GM12878 (cell line): ENCODE measurements at regions of chrX and their contacts with region 1.

Region 1: DNA sequence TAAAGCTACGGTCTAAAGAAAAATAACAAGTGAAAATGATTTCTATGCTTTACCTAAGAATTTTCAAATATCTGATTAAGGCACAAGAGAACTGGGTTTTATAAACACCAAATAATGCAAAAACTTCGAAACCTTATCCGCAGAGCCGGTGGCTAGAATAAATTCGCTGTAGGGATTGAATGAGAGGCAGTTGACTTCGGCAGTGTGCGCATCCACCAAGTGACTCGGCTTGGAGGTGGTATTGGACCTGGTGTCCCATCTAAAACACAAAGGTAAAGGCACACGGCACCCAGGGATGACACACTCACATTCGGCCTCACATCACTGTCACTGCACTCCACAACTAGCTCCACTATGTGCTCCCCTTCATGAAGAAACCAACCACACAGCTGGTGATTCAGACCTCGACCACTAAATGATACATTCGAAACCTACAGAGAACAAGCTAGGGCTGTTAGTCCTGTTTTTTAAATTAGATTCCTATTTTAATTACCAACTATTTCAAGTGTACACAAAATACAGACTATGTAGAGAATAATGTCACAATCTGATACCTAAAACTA is 17.5 kb downstream of the RBBP7 start:
- DNase-seq: no peak
- ATAC-seq: peak; percentile 60
- H3K4me3 ChIP-seq: no peak overlapping the region
- H3K27ac ChIP-seq: no peak overlapping the region
- H3K4me1 ChIP-seq: no peaks in the 10 kb centered on the region
- H3K27me3 ChIP-seq: no peaks in the 10 kb centered on the region
- CTCF ChIP-seq: no peak
- EP300 ChIP-seq: no peak
- POLR2A ChIP-seq: no peak
- RAD21 ChIP-seq: no peak

Region 2: DNA sequence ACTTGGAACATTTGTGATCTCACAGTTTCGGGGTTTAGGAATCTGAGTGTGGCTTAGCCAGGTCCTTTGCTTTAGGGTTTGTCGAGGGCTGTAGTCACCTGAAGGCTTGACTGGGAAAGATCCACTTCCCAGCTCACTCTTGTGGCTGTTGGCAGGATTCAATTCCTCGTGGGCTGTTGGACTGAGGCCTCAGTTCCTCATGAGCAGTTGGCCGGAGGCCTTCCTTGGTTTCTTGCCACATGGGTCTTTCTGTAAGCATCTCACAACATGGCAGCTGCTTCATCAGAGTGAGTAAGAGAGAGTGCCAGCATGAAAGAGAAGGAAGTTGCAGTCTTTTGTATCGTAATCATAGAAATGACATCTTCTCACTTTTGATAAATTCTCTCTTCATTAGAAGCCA is 55.3 kb before region 1 on chrX:
- CTCF ChIA-PET with region 1: no interaction called
- POLR2A ChIA-PET with region 1: no interaction called
- RAD21 ChIA-PET with region 1: no interaction called
- SMC1A ChIA-PET with region 1: no interaction called
- in situ Hi-C with region 1: no loop called
- intact Hi-C with region 1: no loop called
- DNase-seq: no peak
- ATAC-seq: no peak
- H3K4me3 ChIP-seq: no peak overlapping the region
- H3K27ac ChIP-seq: no peak overlapping the region
- H3K4me1 ChIP-seq: no peaks in the 10 kb centered on the region
- H3K27me3 ChIP-seq: no peaks in the 10 kb centered on the region
- CTCF ChIP-seq: no peak
- EP300 ChIP-seq: no peak
- POLR2A ChIP-seq: no peak
- RAD21 ChIP-seq: no peak

Region 3: GRCh38 chrX:16870095-16870860 is 17.6 kb after region 1 on chrX and contains the start of gene RBBP7:
- CTCF ChIA-PET with region 1: no interaction called
- POLR2A ChIA-PET with region 1: interaction called, 12 read pairs
- RAD21 ChIA-PET with region 1: no interaction called
- SMC1A ChIA-PET with region 1: interaction called, 8 read pairs
- in situ Hi-C with region 1: no loop called
- intact Hi-C with region 1: no loop called
- DNase-seq: peak; percentile 57
- ATAC-seq: peak; percentile 89
- H3K4me3 ChIP-seq: peak within 1 kb of the TSS; percentile 93
- H3K27ac ChIP-seq: peak within 1 kb of the TSS; percentile 92
- H3K4me1 ChIP-seq: peaks cover 7% of the 10 kb centered on the region
- H3K27me3 ChIP-seq: peaks cover 0 to 6% of the 10 kb centered on the region in 2 experiments; a peak in 1 of 4 replicates
- CTCF ChIP-seq: no peak
- EP300 ChIP-seq: no peak
- POLR2A ChIP-seq: peak; percentile 84
- RAD21 ChIP-seq: no peak
- polyA plus RNA-seq, gene RBBP7: 95.3 to 155 TPM

Region 4: GRCh38 chrX:17547658-17548057 is 695.0 kb after region 1 on chrX:
- CTCF ChIA-PET with region 1: no interaction called
- POLR2A ChIA-PET with region 1: no interaction called
- RAD21 ChIA-PET with region 1: no interaction called
- SMC1A ChIA-PET with region 1: no interaction called
- in situ Hi-C with region 1: no loop called
- intact Hi-C with region 1: no loop called
- DNase-seq: peak; percentile 56
- ATAC-seq: peak; percentile 77
- H3K4me3 ChIP-seq: no peak overlapping the region
- H3K27ac ChIP-seq: 0 out of 2 replicates have a peak overlapping the region, but pooled peaks have one; percentile 14
- H3K4me1 ChIP-seq: 0 out of 2 replicates have a peak, but pooled peaks cover 5% of the 10 kb centered on the region
- H3K27me3 ChIP-seq: no peaks in the 10 kb centered on the region
- CTCF ChIP-seq: no peak
- EP300 ChIP-seq: no peak
- POLR2A ChIP-seq: no peak
- RAD21 ChIP-seq: no peak